ENCODE measurements at regions of chr10 and their contacts with region 1.

Region 1: GRCh38 chr10:128069351-128070051 is 56.7 kb downstream of the MKI67 start:
- DNase-seq: peak; percentile 84
- ATAC-seq: peak; percentile 64

Region 2: DNA sequence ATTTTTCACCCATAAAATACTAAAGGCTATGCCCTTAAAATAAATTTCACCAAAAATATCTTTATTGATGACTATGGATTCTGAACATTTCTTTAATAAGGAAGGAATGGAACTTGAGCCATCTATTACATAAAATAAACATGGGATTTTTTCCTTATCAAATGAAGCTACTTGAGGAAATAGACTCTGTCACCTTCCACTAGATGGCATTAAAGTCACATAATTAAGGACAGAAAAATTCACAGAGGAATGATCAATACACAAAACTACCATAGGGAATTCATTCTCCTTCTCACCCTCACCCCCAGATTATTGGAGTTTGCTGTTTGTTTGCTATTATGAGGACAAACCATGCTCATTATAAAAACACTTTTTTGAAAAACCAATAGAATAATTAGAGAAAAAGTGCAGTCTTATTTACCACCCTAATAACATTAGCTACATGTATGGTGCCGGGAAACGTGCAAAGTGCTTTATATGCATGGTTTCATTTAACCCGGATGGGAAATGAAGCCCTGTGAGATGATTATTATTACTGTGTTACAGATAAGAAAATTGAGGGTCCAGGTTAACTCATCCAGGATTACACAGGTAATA is 353.6 kb before region 1 on chr10:
- intact Hi-C with region 1: loop called (anchors 5 kb)
- DNase-seq: no peak
- ATAC-seq: no peak

Region 3: GRCh38 chr10:127906548-127907377 is 162.7 kb before region 1 on chr10 and contains the start of gene PTPRE:
- intact Hi-C with region 1: loop called (anchors 1 kb)
- DNase-seq: peak; percentile 92
- ATAC-seq: peak; percentile 93
- total RNA-seq, gene PTPRE: 17.4 TPM

Region 4: DNA sequence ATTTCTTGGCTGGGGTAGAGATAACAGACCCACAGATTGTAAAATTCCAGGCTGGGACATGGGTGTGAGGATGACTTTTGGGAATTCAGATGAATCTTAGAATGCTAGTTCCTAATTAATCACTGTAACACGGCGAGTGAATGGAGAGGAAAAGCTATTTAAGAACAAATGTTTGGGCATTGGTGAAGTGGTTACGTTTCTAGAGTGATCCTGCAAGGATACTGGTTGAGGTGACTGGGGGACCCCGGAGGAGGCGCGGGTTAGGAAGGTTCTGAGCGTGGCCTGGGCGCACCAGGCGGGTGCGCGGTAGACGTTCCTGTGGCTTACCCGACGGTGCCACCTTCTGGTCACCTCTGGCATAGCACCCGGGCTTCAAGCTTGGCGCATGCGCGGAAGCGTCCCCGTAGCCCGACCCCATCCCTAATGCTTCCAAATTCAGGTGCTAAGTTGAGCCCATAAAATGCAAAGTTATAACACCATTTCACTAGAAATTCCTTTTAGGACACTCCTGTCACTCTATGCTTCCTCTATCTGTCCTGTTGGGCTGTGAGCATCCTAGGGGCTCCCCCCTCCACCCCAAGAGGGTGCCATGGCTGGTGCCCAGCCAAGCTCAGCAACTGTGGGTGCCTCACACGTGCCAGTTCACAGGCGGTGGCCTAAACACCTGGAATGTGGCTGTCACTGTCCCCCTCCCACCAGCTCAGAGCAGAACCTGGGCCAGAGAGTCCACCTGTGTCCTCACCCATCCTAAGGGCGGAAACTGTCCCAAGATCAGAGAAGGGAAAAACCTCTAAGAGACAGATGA is 58.1 kb before region 1 on chr10:
- intact Hi-C with region 1: loop called (anchors 10 kb)
- DNase-seq: peak; percentile 91
- ATAC-seq: peak; percentile 88

Region 5: DNA sequence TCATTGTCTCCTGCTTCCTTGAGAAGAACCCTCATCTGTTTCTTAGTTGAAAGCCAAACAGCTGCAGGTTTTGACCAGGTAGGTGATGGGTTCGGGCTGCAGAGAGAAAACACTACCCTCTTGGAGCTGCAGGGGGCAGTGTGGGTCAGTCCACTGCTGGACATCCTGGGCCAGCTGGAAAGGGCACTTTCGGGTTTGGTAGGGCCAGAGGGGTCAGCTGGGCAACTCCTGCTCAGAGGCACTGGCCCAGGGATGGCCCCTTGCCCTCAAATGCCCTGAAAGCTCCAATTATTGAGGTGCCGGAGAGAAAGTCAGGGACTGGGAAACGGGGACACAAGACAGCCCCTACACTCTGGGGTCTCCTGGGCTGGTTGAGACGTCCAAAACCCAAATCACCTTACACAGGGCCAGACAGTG is 33.9 kb before region 1 on chr10:
- intact Hi-C with region 1: loop called (anchors 2 kb)
- DNase-seq: no peak
- ATAC-seq: peak; percentile 59

Region 6: DNA sequence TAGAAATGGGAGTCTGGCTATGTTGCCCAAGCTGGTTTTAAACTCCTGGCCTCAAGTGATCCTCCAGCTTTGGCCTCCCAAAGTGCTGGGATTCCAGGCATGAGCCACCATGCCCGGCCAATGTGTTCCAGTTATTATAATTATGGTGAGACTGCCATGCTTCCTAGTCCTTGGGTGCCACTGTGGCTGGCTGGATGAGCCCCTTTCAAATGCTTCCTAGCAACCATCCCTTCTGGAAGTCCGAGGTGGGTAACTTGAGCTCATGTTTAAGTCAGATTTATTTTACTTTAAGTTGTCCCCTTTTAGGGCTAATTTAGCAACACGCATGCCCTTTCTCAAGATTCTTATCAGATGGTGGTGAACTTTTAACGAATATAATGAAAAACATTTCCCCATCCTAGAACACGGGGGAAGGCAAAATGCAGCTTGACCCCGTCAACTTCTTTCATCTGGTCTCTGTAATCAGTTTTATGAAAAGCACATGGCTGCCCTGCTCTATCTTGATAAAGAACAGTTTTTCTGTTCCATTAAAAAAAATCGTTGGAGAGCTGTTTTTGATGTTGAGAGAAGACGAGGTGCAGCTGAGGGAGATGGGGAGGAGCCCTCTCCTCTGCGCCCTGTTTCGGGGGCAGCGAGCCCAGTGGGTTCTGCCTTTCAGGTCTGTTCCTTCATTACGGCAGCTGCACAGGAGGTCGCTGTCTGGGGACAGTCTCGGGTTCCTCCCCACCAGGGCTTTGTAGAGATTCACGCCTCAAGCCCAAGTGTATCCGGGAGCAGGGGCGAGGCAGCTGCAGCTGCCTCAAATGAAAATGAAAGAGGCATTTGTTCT is 117.7 kb after region 1 on chr10:
- intact Hi-C with region 1: no loop called
- DNase-seq: no peak
- ATAC-seq: no peak